ENCODE measurements at regions of chr2 and their contacts with region 1.

Region 1: DNA sequence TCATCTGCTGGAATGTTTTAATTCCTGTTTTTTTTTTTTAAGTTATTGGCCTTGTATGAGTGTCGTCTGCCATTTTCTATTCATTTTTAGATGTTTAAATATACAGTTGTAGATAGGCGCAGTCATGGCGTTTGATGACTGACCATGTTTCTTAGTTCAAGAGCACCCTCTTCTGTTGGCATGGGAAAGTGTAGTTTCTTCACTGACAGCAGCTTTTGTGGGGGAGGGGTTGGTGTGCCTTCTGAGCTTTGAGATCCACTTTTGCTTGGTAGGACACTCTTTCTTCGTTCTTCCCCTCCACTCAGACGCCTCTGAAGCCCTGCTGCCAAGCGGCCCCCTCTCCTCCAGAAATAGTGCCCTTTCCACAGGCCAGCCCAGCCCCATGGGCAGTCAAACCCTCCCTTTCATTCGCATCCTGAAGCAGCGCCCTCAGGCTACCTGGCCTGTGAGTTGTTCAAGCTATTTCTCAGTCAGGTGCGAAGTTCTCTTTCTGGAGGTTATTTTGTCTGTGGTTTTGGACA is 492.0 kb downstream of the TNS1 start:
- DNase-seq: peak; percentile 60
- H3K4me3 Mint-ChIP-seq: no peak overlapping the region
- H3K27ac Mint-ChIP-seq: no peak overlapping the region
- H3K4me1 Mint-ChIP-seq: no peaks in the 10 kb centered on the region
- H3K27me3 Mint-ChIP-seq: peaks cover 4% of the 10 kb centered on the region

Region 2: GRCh38 chr2:216680951-216681629 is 829.7 kb before region 1 on chr2:
- CTCF ChIA-PET with region 1: interaction called, 12 read pairs
- DNase-seq: no peak
- H3K4me3 Mint-ChIP-seq: no peak overlapping the region
- H3K27ac Mint-ChIP-seq: no peak overlapping the region
- H3K4me1 Mint-ChIP-seq: peaks cover 3% of the 10 kb centered on the region
- H3K27me3 Mint-ChIP-seq: peaks cover 52% of the 10 kb centered on the region

Region 3: DNA sequence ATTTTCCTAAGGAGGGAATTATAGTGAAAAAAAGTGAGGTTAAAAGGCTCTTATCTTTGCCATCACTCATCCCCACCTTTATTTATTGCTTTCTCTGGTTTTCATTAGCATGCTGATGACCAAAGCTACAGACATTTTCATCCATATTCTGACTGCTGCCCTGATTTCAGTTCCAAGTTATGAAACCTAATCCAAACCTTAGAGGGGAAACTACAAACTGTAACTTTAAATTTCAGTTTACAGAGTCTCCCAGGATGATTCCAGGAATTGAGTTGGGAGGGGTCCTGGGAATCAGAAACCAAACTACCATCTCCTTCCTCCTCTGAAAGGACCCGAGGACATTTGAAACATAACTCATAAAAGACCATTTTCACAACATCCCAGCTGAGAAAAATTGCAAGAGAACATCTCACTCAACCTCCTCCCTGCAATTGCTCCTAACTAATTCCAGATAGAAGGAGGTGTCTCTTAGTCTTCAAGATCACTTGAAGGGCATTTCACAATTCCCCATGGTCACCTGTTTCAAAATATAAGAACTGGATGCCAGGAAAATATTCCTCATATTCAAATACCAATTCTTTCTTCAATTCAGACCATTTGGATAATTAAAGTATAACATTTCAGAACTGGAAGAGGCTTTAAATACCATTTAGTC is 28.6 kb before region 1 on chr2:
- CTCF ChIA-PET with region 1: no interaction called
- DNase-seq: no peak
- H3K4me3 Mint-ChIP-seq: no peak overlapping the region
- H3K27ac Mint-ChIP-seq: no peak overlapping the region
- H3K4me1 Mint-ChIP-seq: no peaks in the 10 kb centered on the region
- H3K27me3 Mint-ChIP-seq: no peaks in the 10 kb centered on the region

Region 4: GRCh38 chr2:217521820-217522219 is 11.0 kb after region 1 on chr2:
- CTCF ChIA-PET with region 1: no interaction called
- DNase-seq: no peak
- H3K4me3 Mint-ChIP-seq: no peak overlapping the region
- H3K27ac Mint-ChIP-seq: no peak overlapping the region
- H3K4me1 Mint-ChIP-seq: no peaks in the 10 kb centered on the region
- H3K27me3 Mint-ChIP-seq: no peaks in the 10 kb centered on the region